Right ventricle myocardium inferior (tissue), 1 donor: ENCODE measurements at regions of chr15 and their contacts with region 1.

Region 1: GRCh38 chr15:89750560-89751542 is at the start of gene MESP1:
- DNase-seq: peak; percentile 98
- ATAC-seq: peak; percentile 95
- total RNA-seq, gene MESP1: 7.4 TPM

Region 2: DNA sequence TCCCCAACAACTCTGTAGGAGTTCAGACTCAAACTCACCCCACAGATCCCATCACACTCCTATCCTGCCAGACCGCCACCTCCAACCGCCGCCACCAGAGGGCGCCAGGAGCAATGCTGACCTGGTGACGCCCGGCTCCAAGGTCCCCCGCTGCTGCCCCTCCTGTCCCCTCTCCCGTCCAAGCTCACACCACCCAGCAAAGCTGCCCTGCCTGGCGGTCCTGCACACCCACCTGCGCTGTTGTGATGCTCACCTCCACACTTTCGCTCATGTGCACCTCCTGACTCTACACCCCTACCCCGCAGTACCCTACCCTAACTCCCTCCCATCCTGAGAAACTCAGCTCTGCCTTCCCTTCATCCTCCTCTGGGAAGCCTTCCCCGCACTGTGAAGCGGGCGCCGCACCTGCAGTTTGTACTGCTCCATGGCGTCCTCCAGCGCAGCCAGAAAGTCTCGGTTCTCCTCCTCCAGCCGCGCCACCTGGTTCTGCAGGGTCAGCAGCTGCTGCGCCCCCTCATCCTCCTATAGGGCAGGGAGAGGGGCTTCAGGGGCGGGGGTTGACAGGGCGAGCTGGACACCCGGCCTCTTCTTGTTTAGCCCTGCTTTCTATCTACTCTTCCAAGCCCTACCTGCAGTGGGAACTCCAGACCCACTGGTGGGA is 103.5 kb before region 1 on chr15:
- intact Hi-C with region 1: loop called (anchors 2 kb)
- DNase-seq: peak; percentile 85
- ATAC-seq: peak; percentile 71

Region 3: DNA sequence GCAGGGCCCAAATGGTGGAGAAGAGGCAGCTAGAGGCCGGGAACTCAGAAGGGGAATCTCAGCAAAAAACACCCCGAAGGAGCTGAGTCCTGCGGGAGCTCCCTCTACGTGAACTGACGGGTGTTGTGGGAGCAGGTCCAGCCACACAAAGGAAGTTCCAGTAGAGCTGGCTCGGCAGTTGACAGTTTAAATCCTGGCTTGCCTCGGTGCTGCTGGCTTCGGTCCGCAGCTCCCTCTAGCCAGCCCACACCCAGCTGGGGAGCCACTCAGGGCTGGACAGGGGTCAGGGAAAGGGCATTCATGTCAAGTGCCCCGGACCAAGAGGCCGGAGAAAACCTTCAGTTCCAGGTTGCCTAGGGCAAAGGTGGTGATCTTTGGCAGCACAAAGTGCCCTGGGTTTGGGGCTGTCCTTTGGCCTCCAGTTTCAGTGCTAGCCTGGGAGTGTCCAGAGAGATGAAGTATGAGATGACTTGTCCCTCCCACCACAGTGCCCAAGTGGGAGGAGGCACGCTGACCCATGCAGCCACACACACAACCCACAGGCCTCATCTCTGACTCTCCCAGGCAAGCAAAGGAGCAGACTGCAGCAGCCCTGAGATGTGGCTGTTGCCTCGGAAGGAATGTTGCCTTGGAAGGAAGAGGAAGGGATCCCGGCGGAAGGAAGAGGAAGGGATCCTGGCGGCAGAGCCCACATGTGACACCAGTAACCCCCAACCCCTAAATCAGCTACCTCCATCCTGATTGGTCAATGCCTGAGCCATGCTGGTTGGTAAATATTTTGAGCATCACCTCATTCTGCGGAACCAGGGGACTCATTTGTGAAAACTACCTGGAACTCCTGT is 77.6 kb after region 1 on chr15:
- intact Hi-C with region 1: loop called (anchors 5 kb)
- DNase-seq: peak; percentile 80
- ATAC-seq: peak; percentile 91